WTC11 (cell line): ENCODE measurements at regions of chr2 and their contacts with region 1.

Region 1: GRCh38 chr2:191051825-191052778 is 38.1 kb upstream of the STAT1 start:
- DNase-seq: no peak
- ATAC-seq: peak; percentile 53; the same call in 1 of the 2 replicates
- H3K4me3 Mint-ChIP-seq: no peak overlapping the region
- H3K27ac Mint-ChIP-seq: no peak overlapping the region
- H3K4me1 Mint-ChIP-seq: peaks cover 10% of the 10 kb centered on the region; the same call in 1 of the 2 replicates
- H3K27me3 Mint-ChIP-seq: no peaks in the 10 kb centered on the region; the same call in 1 of the 2 replicates
- CTCF ChIP-seq: peak; percentile 54; the same call in 1 of the 2 replicates

Region 2: GRCh38 chr2:190940454-190940853 is 111.6 kb before region 1 on chr2:
- CTCF ChIA-PET with region 1: no interaction called
- POLR2A ChIA-PET with region 1: no interaction called
- DNase-seq: no peak
- ATAC-seq: no peak
- H3K4me3 Mint-ChIP-seq: no peak overlapping the region
- H3K27ac Mint-ChIP-seq: peak overlapping the region; percentile 31; the same call in 1 of the 2 replicates
- H3K4me1 Mint-ChIP-seq: peaks cover 37% of the 10 kb centered on the region
- H3K27me3 Mint-ChIP-seq: no peaks in the 10 kb centered on the region
- CTCF ChIP-seq: no peak

Region 3: GRCh38 chr2:191041418-191042161 is 10.5 kb before region 1 on chr2:
- CTCF ChIA-PET with region 1: interaction called, 25 read pairs
- POLR2A ChIA-PET with region 1: no interaction called
- DNase-seq: peak; percentile 20
- ATAC-seq: peak; percentile 98
- H3K4me3 Mint-ChIP-seq: no peak overlapping the region
- H3K27ac Mint-ChIP-seq: 0 out of 2 replicates have a peak overlapping the region, but pooled peaks have one; percentile 10
- H3K4me1 Mint-ChIP-seq: peaks cover 14% of the 10 kb centered on the region
- H3K27me3 Mint-ChIP-seq: no peaks in the 10 kb centered on the region
- CTCF ChIP-seq: no peak

Region 4: DNA sequence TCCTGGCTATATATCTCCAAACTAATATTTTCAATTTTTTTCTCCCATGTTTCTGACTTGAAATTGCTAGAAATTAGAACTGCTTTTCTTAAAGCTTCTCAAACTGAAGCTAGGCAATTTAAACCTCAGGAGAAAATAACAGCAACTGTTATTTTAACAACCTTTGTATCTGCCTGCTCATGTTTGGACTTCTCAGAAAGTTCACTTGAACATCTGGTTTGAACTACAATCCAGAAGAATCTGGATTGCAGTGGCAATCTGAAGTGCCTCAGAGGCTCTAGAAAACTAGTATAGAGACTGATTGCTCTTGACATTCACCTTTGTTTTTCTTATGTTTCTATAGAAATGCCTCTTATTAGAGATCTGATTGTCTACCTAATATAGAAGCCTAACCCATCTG is 34.6 kb after region 1 on chr2:
- CTCF ChIA-PET with region 1: interaction called, 12 read pairs
- POLR2A ChIA-PET with region 1: no interaction called
- DNase-seq: no peak
- ATAC-seq: no peak
- H3K4me3 Mint-ChIP-seq: no peak overlapping the region
- H3K27ac Mint-ChIP-seq: peak overlapping the region; percentile 63; the same call in 1 of the 2 replicates
- H3K4me1 Mint-ChIP-seq: peaks cover 27% of the 10 kb centered on the region
- H3K27me3 Mint-ChIP-seq: no peaks in the 10 kb centered on the region
- CTCF ChIP-seq: no peak

Region 5: DNA sequence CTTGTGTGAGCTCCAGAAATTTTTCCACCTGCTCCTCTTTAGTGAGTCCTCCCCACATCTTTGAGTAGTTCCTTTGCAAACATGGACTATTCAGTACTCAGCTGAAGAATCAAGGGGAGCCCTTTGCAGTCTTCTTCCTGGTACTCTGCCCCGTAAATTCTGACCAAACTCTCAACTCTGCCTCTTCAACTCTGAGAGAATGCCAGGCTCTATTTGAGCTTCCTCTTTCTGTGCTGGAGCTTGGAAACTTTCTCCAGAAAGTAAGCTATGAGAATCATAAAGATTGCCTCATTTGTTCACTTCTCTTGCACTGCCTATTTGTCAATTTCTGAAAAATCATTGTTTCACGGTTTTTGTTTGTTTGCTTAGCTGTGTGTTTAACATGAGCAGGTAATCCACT is 106.1 kb after region 1 on chr2:
- CTCF ChIA-PET with region 1: interaction called, 68 read pairs
- POLR2A ChIA-PET with region 1: no interaction called
- DNase-seq: no peak
- ATAC-seq: no peak
- H3K4me3 Mint-ChIP-seq: no peak overlapping the region
- H3K27ac Mint-ChIP-seq: no peak overlapping the region
- H3K4me1 Mint-ChIP-seq: no peaks in the 10 kb centered on the region
- H3K27me3 Mint-ChIP-seq: peaks cover 9% of the 10 kb centered on the region
- CTCF ChIP-seq: no peak

Region 6: GRCh38 chr2:191218292-191218898 is 166.3 kb after region 1 on chr2:
- CTCF ChIA-PET with region 1: interaction called, 17 read pairs
- POLR2A ChIA-PET with region 1: no interaction called
- DNase-seq: peak; percentile 73
- ATAC-seq: peak; percentile 94
- H3K4me3 Mint-ChIP-seq: no peak overlapping the region
- H3K27ac Mint-ChIP-seq: no peak overlapping the region
- H3K4me1 Mint-ChIP-seq: peaks cover 9% of the 10 kb centered on the region
- H3K27me3 Mint-ChIP-seq: no peaks in the 10 kb centered on the region
- CTCF ChIP-seq: no peak; the same call in 1 of the 2 replicates